ENCODE measurements at regions of chr5 and their contacts with region 1.

Region 1: DNA sequence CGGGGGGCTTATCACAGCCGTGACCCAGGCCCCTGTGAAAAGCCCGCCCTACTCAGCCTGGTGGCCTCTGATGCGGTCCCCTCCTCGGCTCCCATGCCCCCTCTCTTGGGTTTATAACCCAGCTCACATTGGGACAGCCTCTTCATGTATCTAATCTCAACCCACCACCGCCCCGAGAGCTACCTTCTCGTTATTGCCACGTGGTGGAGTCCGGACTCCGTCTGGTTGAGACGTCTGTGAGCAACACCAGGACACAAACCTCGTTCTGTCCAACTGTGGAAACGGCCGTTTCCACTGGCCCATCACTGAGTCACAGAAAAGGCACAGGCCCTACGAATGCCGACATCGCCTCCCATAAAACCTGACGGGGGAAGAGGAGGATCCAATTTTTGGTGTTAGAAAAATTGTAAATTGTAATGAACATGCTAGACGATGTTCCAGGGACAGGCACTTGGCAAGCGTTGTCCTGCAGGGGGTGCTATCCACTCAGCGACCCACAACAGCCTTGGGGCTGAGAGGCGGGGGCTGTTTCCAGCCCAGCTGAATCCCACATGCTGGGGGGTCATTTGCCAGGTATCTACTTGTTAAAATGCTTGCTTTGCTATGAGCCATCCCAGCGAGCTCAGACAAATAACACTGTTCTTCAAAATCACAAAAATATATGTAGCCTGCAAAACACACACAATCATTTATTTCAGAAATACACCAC is 37.3 kb upstream of the N4BP3 start:
- DNase-seq: peak; percentile 90
- ATAC-seq: peak; percentile 83
- H3K4me3 Mint-ChIP-seq: peak overlapping the region; percentile 55
- H3K27ac Mint-ChIP-seq: no peak overlapping the region
- H3K4me1 Mint-ChIP-seq: peaks cover 15% of the 10 kb centered on the region
- H3K27me3 Mint-ChIP-seq: peaks cover 15% of the 10 kb centered on the region
- CTCF ChIP-seq: peak; percentile 87

Region 2: GRCh38 chr5:178086276-178086675 is 10.3 kb after region 1 on chr5:
- CTCF ChIA-PET with region 1: interaction called, 15 read pairs
- POLR2A ChIA-PET with region 1: no interaction called
- DNase-seq: peak; percentile 35
- ATAC-seq: peak; percentile 71
- H3K4me3 Mint-ChIP-seq: no peak overlapping the region; the same call in 1 of the 2 replicates
- H3K27ac Mint-ChIP-seq: no peak overlapping the region
- H3K4me1 Mint-ChIP-seq: peaks cover 29% of the 10 kb centered on the region
- H3K27me3 Mint-ChIP-seq: peaks cover 2% of the 10 kb centered on the region; the same call in 1 of the 2 replicates
- CTCF ChIP-seq: no peak

Region 3: GRCh38 chr5:178113199-178113787 is 37.3 kb after region 1 on chr5 and contains the start of gene N4BP3:
- CTCF ChIA-PET with region 1: interaction called, 138 read pairs
- POLR2A ChIA-PET with region 1: interaction called, 4 read pairs
- DNase-seq: peak; percentile 86
- ATAC-seq: peak; percentile 57
- H3K4me3 Mint-ChIP-seq: peak within 1 kb of the TSS; percentile 99
- H3K27ac Mint-ChIP-seq: peak within 1 kb of the TSS; percentile 98
- H3K4me1 Mint-ChIP-seq: peaks cover 41% of the 10 kb centered on the region
- H3K27me3 Mint-ChIP-seq: no peaks in the 10 kb centered on the region
- CTCF ChIP-seq: no peak
- total RNA-seq, gene N4BP3: 40.3 to 46.2 TPM (median 41.6 TPM) in 3 replicates

Region 4: DNA sequence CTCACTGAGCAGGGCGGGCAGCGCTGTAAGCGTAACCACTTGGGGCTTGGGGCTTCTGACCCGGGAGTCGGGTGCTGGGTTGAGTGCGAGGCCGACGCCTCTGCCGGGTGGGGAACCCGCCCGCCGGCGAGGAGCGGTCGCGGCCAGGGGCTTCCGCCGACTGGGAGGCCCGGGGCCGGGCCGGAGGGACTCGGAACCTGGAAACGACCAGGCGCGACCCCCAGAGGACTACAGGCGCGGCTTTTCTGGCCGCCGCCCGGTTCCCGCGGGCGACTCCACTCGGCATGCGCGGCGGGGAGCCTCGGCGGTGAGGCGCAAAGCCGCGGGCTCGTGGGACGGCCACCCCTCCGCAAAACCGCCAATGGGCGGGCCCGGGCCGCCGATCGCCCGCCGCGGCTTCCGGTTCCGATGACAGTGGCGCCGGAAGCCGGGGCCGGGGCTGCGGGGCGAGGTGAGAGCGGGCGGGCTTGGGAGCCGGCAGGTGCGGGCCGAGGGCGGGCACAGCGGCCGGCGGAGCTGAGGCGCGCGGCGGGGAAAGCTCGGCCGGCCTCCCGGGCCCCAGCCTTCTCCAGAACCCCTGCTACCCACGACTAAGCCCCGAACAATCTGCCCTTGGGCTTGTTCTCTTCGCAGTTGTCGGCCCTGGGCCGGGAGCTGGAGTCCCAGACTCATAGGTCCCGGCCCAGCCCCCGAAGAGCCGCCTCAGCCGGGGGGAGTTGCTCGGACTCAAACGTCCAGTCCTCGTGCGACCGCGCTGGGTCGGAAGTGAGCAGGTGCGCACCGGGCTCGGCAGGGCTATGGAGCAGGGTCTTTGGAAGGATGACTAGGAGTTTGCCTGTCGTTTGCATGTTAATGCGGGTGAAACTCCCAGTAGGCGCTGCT is 54.9 kb after region 1 on chr5 and contains the start of gene RMND5B:
- CTCF ChIA-PET with region 1: interaction called, 16 read pairs
- POLR2A ChIA-PET with region 1: interaction called, 4 read pairs
- DNase-seq: peak; percentile 78
- ATAC-seq: peak; percentile 42
- H3K4me3 Mint-ChIP-seq: peak within 1 kb of the TSS; percentile 78
- H3K27ac Mint-ChIP-seq: peak within 1 kb of the TSS; percentile 97
- H3K4me1 Mint-ChIP-seq: peaks cover 64% of the 10 kb centered on the region
- H3K27me3 Mint-ChIP-seq: no peaks in the 10 kb centered on the region
- CTCF ChIP-seq: no peak
- total RNA-seq, gene RMND5B: 86.1 to 93.3 TPM (median 92.5 TPM) in 3 replicates

Region 5: DNA sequence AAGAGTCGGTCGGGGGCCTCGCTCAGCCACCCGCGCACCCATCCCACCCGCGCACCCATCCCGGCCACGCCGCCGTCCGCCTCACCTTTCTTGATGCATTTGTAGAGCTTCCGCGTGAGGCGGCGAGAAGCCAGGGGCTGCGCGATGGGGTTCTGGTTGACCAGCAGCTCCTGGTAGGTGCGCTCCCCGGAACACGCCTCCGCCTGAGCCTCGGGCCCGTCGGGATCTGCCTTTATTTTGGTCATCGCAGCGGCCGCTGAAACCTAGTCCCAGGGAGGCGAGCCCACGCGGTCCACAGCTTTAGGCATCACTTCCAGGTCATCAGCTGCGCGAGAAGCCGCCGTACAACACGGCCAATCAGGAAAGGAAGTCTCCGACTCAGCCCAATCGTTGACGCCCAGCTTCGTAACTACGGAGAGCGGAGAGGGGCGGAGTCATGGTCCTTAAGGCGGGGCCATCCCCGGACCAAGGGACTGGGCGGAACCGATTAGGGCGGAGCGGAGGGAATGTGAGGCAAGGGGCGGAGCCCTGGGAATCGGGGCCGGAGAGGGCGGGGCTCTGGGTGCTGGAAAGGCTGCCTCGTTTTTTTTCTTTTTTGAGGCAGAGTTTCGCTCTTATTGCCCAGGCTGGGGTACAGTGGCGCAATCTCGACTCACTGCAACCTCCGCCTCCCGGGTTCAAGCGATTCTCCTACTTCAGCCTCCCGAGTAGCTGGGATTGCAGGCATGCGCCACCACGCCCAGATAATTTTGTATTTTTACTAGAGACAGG is 77.8 kb after region 1 on chr5 and contains the start of gene NHP2:
- CTCF ChIA-PET with region 1: interaction called, 131 read pairs
- POLR2A ChIA-PET with region 1: interaction called, 7 read pairs
- DNase-seq: peak; percentile 99
- ATAC-seq: peak; percentile 96
- H3K4me3 Mint-ChIP-seq: peak within 1 kb of the TSS; percentile 94
- H3K27ac Mint-ChIP-seq: peak within 1 kb of the TSS; percentile 94
- H3K4me1 Mint-ChIP-seq: peaks cover 13% of the 10 kb centered on the region
- H3K27me3 Mint-ChIP-seq: no peaks in the 10 kb centered on the region
- CTCF ChIP-seq: no peak
- total RNA-seq, gene NHP2: 263 to 269 TPM (median 264 TPM) in 3 replicates

Region 6: DNA sequence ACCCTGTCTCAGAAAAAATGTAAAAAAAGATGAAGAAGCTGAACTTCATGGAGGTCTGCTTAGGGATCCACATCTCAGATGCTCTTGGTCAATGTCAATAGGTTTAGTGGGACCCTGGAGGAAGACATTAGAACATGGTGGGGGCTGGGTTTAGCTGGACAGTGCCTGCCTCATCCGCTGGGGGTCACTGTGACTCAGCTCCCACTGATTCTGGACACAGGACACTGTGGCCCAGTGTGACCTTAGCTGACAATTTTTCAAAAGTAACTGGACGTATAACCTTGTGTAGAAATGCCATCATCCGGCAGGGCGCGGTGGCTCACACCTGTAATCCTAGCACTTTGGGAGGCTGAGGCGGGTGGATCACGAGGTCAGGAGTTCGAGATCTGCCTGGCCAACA is 121.0 kb after region 1 on chr5:
- CTCF ChIA-PET with region 1: interaction called, 14 read pairs
- POLR2A ChIA-PET with region 1: no interaction called
- DNase-seq: peak; percentile 60
- ATAC-seq: peak; percentile 76
- H3K4me3 Mint-ChIP-seq: no peak overlapping the region
- H3K27ac Mint-ChIP-seq: no peak overlapping the region
- H3K4me1 Mint-ChIP-seq: peaks cover 23% of the 10 kb centered on the region
- H3K27me3 Mint-ChIP-seq: peaks cover 18% of the 10 kb centered on the region
- CTCF ChIP-seq: peak; percentile 44

Region 7: GRCh38 chr5:178221282-178221681 is 145.3 kb after region 1 on chr5:
- CTCF ChIA-PET with region 1: no interaction called
- POLR2A ChIA-PET with region 1: no interaction called
- DNase-seq: no peak
- ATAC-seq: no peak
- H3K4me3 Mint-ChIP-seq: no peak overlapping the region
- H3K27ac Mint-ChIP-seq: peak overlapping the region; percentile 32; the same call in 1 of the 2 replicates
- H3K4me1 Mint-ChIP-seq: peaks cover 24% of the 10 kb centered on the region
- H3K27me3 Mint-ChIP-seq: 0 out of 2 replicates have a peak, but pooled peaks cover 2% of the 10 kb centered on the region
- CTCF ChIP-seq: no peak

Region 8: DNA sequence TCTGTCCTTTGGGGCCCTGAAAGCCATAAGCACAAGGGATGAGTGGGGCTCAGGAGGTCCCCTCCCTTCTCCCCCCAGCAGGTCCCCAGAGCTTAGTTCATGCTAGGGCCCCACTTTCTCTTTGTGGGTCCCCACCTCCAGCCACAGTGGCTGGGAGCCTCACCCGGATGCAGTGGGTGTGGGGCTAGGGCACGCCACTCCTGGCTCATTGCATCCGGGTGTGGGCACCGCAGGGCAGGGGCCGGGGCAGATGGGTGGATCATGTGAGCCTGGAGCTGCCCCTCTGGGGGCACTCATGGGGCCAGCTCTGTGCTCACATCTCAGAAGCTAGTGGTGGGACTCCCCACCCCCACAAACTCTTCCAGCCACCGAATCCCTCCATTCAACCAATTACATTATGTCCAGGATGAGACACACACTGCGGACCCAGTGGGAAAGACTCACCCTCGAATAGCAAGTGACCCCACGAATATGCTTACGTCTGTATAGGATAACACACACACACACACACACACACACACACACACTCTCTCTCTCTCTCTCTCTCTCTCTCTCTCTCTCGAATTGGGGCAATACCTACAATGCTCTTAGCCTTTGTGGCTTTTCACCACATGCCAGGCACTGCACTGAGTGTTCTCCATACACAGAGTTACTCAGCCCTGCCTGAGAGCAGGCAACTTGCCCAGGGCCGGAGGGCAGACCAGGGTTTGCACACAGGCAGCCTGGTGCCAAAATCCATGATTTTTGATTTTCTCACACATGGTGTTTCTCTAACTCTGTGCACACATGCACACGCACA is 173.4 kb after region 1 on chr5:
- CTCF ChIA-PET with region 1: no interaction called
- POLR2A ChIA-PET with region 1: no interaction called
- DNase-seq: no peak
- ATAC-seq: no peak
- H3K4me3 Mint-ChIP-seq: no peak overlapping the region
- H3K27ac Mint-ChIP-seq: no peak overlapping the region
- H3K4me1 Mint-ChIP-seq: peaks cover 3% of the 10 kb centered on the region; the same call in 1 of the 2 replicates
- H3K27me3 Mint-ChIP-seq: no peaks in the 10 kb centered on the region
- CTCF ChIP-seq: no peak

Region 9: DNA sequence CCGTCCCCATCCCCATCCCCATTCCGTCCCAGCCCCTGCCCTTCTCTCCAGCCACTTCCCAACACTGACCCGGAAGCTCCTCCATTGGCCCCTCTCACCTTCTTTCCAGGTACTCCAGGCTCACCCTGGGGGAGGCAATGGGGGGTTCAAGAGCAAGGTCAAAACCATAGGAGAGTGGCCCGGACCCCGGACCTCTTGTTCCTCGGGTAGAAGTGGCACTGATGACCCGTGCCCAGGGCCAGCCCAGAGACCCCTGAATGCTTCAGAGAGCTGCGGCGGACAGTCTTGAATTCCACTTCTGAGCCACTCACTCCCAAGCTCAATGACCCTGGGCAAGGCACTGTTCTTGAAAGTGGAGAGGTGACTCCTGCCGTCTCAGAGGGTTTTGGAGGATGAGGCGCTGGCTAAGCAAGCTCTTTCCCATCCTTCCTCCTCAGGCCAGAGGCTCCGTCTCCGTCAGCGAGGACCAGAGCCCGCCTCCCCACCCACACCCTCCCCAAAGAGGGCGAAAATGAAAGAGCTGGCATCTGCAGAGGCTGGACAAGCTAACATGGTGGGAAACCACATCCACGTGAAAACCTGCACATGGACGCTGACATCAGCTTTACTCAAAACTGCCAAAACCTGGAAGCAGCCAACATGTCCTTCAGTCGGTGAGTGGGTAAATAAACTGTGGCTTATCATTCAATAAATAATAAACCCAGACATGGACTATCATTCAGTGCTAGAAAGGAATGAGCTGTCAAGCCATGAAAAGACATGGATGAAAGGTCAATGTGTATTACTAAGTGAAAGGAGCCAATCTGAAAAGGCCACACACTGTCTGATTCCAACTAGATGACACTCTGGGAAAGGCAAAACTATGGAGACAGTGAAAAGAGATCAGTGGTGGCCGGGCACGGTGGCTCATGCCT is 183.9 kb after region 1 on chr5:
- CTCF ChIA-PET with region 1: no interaction called
- POLR2A ChIA-PET with region 1: no interaction called
- DNase-seq: no peak
- ATAC-seq: no peak
- H3K4me3 Mint-ChIP-seq: no peak overlapping the region
- H3K27ac Mint-ChIP-seq: no peak overlapping the region
- H3K4me1 Mint-ChIP-seq: no peaks in the 10 kb centered on the region
- H3K27me3 Mint-ChIP-seq: peaks cover 5% of the 10 kb centered on the region; the same call in 1 of the 2 replicates
- CTCF ChIP-seq: no peak

Measured in WTC11 (cell line).